ENCODE measurements at regions of chr15 and their contacts with region 1.

Region 1: DNA sequence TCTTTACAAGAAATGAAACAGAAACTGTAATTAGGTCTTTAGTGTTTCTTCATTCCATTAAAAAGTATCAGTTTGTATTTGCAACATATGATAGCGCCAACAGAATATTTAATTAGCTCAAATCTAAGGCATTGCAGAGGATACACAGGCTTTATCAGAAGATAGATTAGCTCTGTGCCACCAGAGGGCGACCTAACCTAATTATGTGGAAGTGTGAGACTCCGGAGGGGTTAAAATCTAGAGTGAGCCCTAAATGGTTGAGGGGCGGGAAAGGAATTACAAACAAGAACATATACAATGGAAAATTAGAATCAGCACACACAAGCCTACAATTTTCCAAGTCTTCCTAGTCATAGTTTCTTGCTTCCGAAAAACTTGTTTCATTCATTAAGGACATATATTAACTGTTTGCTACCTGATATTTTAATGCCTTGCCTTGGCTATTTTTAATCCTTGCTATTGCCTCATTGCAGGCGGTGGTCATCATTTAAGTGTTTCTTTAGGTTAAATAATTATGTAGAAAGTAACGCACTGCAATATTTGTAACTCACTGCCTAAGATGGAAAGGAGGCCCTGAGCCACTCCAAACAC is 18.0 kb upstream of the RYR3 start:
- DNase-seq: peak; percentile 41 to 52
- H3K4me3 ChIP-seq: no peak overlapping the region
- H3K27ac ChIP-seq: no peak overlapping the region
- H3K4me1 ChIP-seq: peaks cover 24% of the 10 kb centered on the region
- H3K27me3 ChIP-seq: no peaks in the 10 kb centered on the region
- CTCF ChIP-seq: peak; percentile 84

Region 2: DNA sequence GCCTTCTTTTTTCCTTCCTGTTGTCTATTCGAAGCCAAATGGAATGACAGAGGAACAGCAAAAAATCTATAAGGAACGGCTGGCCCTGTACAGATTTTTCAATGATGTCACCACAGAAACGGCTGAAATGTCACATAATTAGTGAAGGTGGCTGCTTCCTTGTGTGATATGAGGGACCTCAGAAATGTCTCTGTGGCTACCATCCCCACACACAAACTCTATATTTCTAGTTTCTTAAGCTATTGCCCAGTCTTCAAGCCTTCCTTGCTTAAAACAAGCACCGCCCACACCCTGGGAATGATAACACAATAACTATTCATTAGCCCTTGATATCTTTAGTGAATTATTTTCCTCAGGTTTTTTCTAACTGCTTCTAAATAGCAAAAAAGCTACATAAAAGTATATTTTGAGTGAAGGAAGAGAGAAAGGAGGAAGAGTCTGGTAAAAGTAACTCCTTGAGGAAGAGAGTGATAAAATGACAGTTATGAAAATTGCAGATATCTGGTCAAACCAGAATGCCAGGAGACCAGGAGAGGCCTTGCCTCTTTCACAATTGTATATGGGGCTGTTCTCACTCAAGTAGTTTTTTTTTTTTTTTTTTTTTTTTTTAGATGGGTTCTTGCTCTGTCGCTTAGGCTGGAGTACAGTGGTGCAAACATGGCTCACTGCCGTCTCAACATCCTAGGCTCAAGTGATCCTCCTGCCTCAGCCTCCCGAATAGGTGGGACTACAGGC is 137.0 kb before region 1 on chr15:
- CTCF ChIA-PET with region 1: interaction called, 15 read pairs
- POLR2A ChIA-PET with region 1: no interaction called
- intact Hi-C with region 1: no loop called
- DNase-seq: peak in 1 of 2 experiments; percentile 57
- H3K4me3 ChIP-seq: no peak overlapping the region
- H3K27ac ChIP-seq: no peak overlapping the region
- H3K4me1 ChIP-seq: peaks cover 11% of the 10 kb centered on the region
- H3K27me3 ChIP-seq: no peaks in the 10 kb centered on the region
- CTCF ChIP-seq: no peak

Region 3: GRCh38 chr15:33242669-33243191 is 50.1 kb before region 1 on chr15:
- CTCF ChIA-PET with region 1: no interaction called
- POLR2A ChIA-PET with region 1: no interaction called
- intact Hi-C with region 1: loop called (anchors 2 kb)
- DNase-seq: peak; percentile 8 to 34
- H3K4me3 ChIP-seq: no peak overlapping the region
- H3K27ac ChIP-seq: peak overlapping the region; percentile 75
- H3K4me1 ChIP-seq: peaks cover 43% of the 10 kb centered on the region
- H3K27me3 ChIP-seq: no peaks in the 10 kb centered on the region
- CTCF ChIP-seq: peak; percentile 63

Region 4: DNA sequence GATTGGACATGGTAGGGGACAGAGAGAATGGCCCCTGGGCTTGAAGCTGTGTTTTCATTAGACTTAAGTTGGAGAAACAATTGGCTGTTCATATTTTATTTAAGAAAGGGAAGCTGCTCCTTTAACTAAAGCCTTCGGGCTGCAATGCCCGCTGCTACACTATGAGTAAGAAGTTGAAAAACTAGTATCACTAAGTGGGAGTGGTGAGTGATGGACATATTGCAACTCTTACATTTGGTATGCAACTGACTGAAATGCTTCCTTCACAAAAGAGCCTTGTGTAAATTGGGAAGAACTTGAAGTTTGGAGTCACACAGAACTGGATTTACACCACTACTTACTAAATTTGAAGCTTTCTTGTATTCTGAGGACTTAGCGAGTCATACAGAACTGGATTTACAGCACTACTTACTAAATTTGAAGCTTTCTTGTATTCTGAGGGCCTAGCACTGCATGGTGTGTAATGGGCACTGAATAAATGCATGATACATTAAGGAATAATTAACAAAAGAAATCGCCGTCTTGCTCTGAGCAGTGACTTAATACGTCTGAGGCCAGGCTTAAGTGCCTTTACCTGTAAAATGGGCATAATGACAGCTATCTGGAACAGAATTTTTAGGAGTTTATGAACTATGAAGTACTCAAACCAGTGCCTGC is 167.5 kb after region 1 on chr15:
- CTCF ChIA-PET with region 1: no interaction called
- POLR2A ChIA-PET with region 1: no interaction called
- intact Hi-C with region 1: loop called (anchors 5 kb)
- DNase-seq: peak; percentile 32 to 88
- H3K4me3 ChIP-seq: peak overlapping the region; percentile 19; the same call in 1 of the 2 replicates
- H3K27ac ChIP-seq: peak overlapping the region; percentile 99
- H3K4me1 ChIP-seq: peaks cover 29% of the 10 kb centered on the region
- H3K27me3 ChIP-seq: no peaks in the 10 kb centered on the region
- CTCF ChIP-seq: no peak

Region 5: DNA sequence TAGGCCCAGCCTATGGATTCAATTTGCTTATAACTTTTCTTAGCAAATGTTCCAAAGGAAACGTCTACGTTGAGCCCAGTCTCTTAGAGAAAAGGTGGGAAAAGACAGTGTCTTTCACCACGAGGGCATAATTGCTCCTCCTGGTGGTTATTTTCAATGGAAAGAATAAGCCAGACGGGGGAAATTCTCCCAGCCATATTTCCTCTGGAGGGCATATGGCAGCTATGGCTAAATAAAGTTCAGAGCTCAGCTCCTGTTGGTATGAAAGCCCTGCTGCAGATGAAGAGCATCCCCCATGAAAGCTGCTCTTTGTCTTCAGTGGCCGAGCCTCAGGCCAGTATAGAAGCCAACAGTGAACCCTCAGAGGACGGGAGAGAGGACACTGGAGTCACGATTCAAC is 315.9 kb after region 1 on chr15:
- CTCF ChIA-PET with region 1: no interaction called
- POLR2A ChIA-PET with region 1: no interaction called
- intact Hi-C with region 1: loop called (anchors 5 kb)
- DNase-seq: no peak
- H3K4me3 ChIP-seq: no peak overlapping the region
- H3K27ac ChIP-seq: no peak overlapping the region
- H3K4me1 ChIP-seq: no peaks in the 10 kb centered on the region
- H3K27me3 ChIP-seq: no peaks in the 10 kb centered on the region
- CTCF ChIP-seq: peak; percentile 38; the same call in 1 of the 2 replicates

Region 6: GRCh38 chr15:33700695-33701304 is 408.0 kb after region 1 on chr15:
- CTCF ChIA-PET with region 1: interaction called, 50 read pairs
- POLR2A ChIA-PET with region 1: no interaction called
- intact Hi-C with region 1: loop called (anchors 1 kb)
- DNase-seq: peak in 1 of 2 experiments; percentile 68
- H3K4me3 ChIP-seq: no peak overlapping the region
- H3K27ac ChIP-seq: no peak overlapping the region
- H3K4me1 ChIP-seq: no peaks in the 10 kb centered on the region
- H3K27me3 ChIP-seq: no peaks in the 10 kb centered on the region
- CTCF ChIP-seq: peak; percentile 85

Measured in PC-9 (cell line).